B cell (primary cell): ENCODE measurements at regions of chr9 and their contacts with region 1.

Region 1: DNA sequence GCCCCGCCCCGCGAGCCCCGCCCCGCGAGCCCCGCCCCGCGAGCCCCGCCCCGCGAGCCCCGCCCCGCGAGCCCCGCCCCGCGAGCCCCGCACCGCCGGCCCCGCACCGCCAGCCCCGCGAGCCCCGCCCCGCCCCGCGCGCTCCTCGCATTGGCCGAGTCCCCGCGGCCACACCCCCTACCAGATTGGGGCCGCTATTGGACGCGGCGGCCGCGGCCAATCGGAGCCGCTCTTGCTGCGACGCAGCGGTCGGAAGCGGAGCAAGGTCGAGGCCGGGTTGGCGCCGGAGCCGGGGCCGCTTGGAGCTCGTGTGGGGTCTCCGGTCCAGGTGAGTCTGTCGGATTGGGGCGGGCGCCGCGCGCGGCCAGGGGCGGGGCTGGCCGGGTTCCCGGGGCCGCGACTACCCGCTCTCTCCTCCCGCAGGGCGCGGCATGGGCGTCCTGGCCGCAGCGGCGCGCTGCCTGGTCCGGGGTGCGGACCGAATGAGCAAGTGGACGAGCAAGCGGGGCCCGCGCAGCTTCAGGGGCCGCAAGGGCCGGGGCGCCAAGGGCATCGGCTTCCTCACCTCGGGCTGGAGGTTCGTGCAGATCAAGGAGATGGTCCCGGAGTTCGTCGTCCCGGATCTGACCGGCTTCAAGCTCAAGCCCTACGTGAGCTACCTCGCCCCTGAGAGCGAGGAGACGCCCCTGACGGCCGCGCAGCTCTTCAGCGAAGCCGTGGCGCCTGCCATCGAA is at the start of gene MRPL41:
- DNase-seq: peak; percentile 92
- ATAC-seq: peak; percentile 81
- H3K4me3 ChIP-seq: peak within 1 kb of the TSS; percentile 4 to 81 (median 65)
- H3K4me3 Mint-ChIP-seq: peak within 1 kb of the TSS; percentile 77
- H3K27ac ChIP-seq: peak within 1 kb of the TSS; percentile 55 to 73
- H3K27ac Mint-ChIP-seq: peak within 1 kb of the TSS; percentile 83
- H3K4me1 ChIP-seq: peaks cover 25 to 37% of the 10 kb centered on the region in 2 donors
- H3K4me1 Mint-ChIP-seq: peaks cover 26% of the 10 kb centered on the region
- H3K27me3 ChIP-seq: no peaks in the 10 kb centered on the region
- H3K27me3 Mint-ChIP-seq: no peaks in the 10 kb centered on the region
- CTCF ChIP-seq: no peak
- total RNA-seq, gene MRPL41: 70.9 and 74.9 TPM in 2 replicates

Region 2: DNA sequence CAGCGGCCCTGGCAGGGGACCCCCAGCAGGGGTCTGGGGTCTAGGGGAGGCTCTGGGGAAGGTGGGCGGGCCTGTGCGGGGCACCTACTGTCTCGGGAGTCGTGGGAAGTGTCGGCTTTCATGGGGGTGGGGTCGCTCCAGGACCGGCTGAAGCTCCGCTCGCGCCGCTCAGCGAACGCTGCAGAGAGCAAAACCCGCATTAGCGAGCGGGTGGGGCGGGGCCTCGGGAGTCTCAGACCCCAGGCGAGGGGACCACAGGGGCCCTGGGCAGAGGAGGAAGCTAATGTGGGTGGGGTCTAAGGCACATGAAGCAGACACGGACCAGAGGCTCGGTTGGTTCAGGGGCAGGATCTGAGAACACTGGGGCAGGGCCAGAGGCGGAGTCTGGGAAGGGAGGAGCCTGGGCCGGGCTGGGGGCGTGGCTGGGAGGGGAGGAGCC is 98.2 kb before region 1 on chr9:
- CTCF ChIA-PET with region 1: no interaction called
- POLR2A ChIA-PET with region 1: no interaction called
- intact Hi-C with region 1: loop called (anchors 2 kb)
- DNase-seq: peak; percentile 85
- ATAC-seq: peak; percentile 86
- H3K4me3 ChIP-seq: peak overlapping the region in 4 of 5 experiments; percentile 11 to 51 (median 38)
- H3K4me3 Mint-ChIP-seq: peak overlapping the region; percentile 71
- H3K27ac ChIP-seq: no peak overlapping the region
- H3K27ac Mint-ChIP-seq: no peak overlapping the region
- H3K4me1 ChIP-seq: peaks cover 37 to 56% of the 10 kb centered on the region in 2 donors
- H3K4me1 Mint-ChIP-seq: peaks cover 29% of the 10 kb centered on the region
- H3K27me3 ChIP-seq: no peaks in the 10 kb centered on the region
- H3K27me3 Mint-ChIP-seq: no peaks in the 10 kb centered on the region
- CTCF ChIP-seq: no peak

Region 3: DNA sequence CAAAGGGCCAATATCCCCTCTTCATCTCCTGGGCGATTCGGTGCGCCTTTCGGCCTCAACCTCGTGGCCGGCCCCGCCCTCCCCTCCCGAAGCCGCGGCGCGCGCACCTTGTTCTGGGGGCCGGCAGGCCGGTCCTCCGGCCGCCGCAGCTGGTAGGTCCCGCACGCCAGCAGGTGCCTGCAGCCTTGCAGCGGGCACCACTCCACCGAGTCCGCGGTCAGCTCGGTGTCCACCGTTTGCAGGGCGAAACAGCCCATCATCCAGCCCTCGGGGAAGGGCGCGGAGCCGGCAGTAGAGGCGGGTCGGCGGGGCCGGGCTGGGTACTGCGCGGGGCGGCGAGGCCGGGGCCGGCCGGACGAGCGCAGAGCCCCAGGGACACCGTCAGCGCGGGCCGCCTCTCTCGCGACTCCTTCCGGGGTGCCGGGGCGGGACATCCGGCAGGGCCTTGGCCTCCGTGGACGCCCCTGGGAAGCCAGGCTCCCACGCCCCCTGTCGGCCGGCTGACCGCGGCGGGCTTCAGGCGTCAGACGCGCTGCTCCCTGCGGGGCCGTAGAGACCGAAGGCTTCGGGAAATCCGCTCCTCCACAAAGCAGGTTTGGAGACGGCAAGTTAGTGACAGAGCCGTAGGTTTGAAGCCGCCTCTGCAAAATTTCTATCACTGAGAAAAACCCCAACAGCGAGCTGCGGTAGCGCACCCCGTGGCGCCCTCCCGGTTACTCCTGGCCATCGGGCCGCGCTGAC is 26.9 kb after region 1 on chr9 and contains the start of gene DPH7:
- CTCF ChIA-PET with region 1: interaction called, 4 read pairs
- POLR2A ChIA-PET with region 1: interaction called, 3 read pairs
- intact Hi-C with region 1: loop called (anchors 1 kb)
- DNase-seq: peak; percentile 92
- ATAC-seq: peak; percentile 97
- H3K4me3 ChIP-seq: peak within 1 kb of the TSS in 4 of 5 experiments; percentile 63 to 92 (median 90)
- H3K4me3 Mint-ChIP-seq: peak within 1 kb of the TSS; percentile 80
- H3K27ac ChIP-seq: peak within 1 kb of the TSS in 1 of 2 donors; percentile 78
- H3K27ac Mint-ChIP-seq: peak within 1 kb of the TSS; percentile 26
- H3K4me1 ChIP-seq: peaks cover 18 to 30% of the 10 kb centered on the region in 2 donors
- H3K4me1 Mint-ChIP-seq: peaks cover 26% of the 10 kb centered on the region
- H3K27me3 ChIP-seq: no peaks in the 10 kb centered on the region
- H3K27me3 Mint-ChIP-seq: no peaks in the 10 kb centered on the region
- CTCF ChIP-seq: peak; percentile 94
- total RNA-seq, gene DPH7: 64.7 and 69.1 TPM in 2 replicates

Region 4: DNA sequence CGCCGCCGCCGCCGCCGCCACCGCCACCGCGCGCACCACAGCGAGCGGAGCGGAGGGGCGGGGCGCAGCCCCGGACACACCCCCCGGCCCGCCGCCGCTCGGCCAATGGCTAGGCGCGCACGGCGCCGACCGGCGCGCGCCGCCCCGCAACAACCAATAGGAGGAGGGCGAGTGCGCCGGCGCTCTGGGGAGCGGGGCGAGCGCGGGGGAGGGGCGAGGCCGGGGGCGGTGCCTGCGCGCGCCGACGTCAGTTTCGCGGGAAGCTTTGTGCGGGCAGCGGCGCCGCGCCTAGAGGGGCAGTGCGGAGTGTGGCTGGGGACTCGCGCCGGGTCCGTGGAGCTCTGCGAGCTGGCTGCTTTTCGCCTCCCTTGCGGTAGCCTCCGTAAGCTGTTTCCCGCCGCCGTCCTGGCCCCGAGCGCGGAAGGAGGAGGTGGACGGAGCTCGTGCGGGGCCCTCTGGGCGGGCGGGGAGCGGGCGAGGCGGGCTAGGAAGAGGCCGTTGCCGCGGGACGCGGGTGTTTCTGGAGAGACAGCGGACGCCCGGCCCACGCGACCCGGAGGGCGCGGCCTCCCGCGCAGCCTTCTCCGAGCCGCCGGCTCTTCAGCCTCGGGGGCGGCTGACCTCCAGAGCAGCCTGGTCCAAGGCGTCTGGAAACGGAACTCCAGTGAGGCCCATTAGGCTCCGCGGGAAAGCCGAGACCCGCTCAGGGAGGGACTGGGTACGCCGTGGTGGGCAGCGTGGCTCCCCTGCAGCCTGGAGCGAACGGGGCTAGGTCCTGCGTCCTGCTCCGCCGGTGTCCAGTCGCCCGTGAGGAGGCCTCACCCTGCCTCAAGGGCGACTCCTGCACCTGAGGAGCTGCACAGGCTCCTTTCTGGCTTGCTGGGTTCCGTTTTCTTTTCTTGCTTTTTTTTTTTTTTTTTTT is 38.9 kb after region 1 on chr9 and contains the start of gene ZMYND19:
- CTCF ChIA-PET with region 1: no interaction called
- POLR2A ChIA-PET with region 1: no interaction called
- intact Hi-C with region 1: loop called (anchors 2 kb)
- DNase-seq: peak; percentile 94
- ATAC-seq: peak; percentile 97
- H3K4me3 ChIP-seq: peak within 1 kb of the TSS; percentile 38 to 83 (median 80)
- H3K4me3 Mint-ChIP-seq: peak within 1 kb of the TSS; percentile 99
- H3K27ac ChIP-seq: peak within 1 kb of the TSS in 1 of 2 donors; percentile 66
- H3K27ac Mint-ChIP-seq: peak within 1 kb of the TSS; percentile 95
- H3K4me1 ChIP-seq: peaks cover 9 to 15% of the 10 kb centered on the region in 2 donors
- H3K4me1 Mint-ChIP-seq: peaks cover 12% of the 10 kb centered on the region
- H3K27me3 ChIP-seq: no peaks in the 10 kb centered on the region
- H3K27me3 Mint-ChIP-seq: no peaks in the 10 kb centered on the region
- CTCF ChIP-seq: no peak
- total RNA-seq, gene ZMYND19: 24.1 and 25.5 TPM in 2 replicates

Region 5: GRCh38 chr9:137605121-137606004 is 53.5 kb after region 1 on chr9 and contains the start of gene ARRDC1:
- CTCF ChIA-PET with region 1: no interaction called
- POLR2A ChIA-PET with region 1: no interaction called
- intact Hi-C with region 1: loop called (anchors 1 kb)
- DNase-seq: peak; percentile 93
- ATAC-seq: peak; percentile 86
- H3K4me3 ChIP-seq: peak within 1 kb of the TSS; percentile 34 to 74 (median 60)
- H3K4me3 Mint-ChIP-seq: peak within 1 kb of the TSS; percentile 86
- H3K27ac ChIP-seq: peak within 1 kb of the TSS in 1 of 2 donors; percentile 61
- H3K27ac Mint-ChIP-seq: peak within 1 kb of the TSS; percentile 65
- H3K4me1 ChIP-seq: peaks cover 12 to 25% of the 10 kb centered on the region in 2 donors
- H3K4me1 Mint-ChIP-seq: peaks cover 21% of the 10 kb centered on the region
- H3K27me3 ChIP-seq: no peaks in the 10 kb centered on the region
- H3K27me3 Mint-ChIP-seq: no peaks in the 10 kb centered on the region
- CTCF ChIP-seq: no peak
- total RNA-seq, gene ARRDC1: 89.2 and 96.6 TPM in 2 replicates